ENCODE measurements at regions of chr17 and their contacts with region 1.

Region 1: DNA sequence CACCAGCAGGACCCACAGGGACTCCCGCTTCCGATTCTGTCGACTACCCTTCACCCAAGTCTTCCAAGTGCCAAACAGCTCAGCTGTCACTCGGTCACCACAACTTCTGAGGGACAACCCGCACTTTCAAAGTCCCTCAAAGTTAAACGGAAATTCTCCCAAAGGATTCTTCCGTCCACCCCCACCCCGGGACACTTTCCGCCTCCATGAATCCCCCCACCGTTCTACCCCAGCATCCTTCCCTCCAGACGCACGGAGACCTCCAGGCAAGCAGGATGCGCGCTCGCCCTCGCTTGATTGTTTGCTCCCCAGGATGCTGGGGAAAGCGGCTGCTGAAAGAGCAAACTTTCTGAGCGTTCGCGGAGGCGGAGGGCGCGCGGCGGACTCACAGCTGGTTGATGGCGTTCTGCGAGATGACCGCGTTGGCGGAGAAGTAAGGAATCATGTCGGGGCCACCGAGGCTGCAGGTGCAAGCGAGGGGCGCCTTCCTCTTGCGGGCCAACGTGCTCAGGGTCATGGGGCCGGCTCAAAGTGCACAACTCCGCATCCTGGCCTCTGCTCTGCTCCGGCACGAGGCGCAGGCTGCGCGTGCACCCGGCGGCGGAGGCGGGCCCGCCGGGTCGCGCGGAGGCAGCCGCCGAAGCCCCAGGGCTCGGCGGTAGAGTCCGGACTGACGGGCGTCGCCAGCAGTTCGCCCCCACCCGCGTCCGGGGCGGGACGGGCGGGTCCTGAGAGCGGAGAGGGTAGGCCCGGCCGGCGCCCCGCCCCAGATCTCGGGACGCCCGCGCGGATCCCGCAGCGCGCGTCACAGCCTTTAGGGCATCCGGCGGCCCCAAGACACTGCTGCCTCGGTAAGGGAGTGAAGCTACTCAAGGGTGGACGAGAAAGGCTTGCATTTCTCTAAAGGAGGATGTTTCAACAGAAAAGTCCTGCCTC is 138.3 kb upstream of the CORO6 start:
- DNase-seq: peak; percentile 98
- ATAC-seq: peak; percentile 99

Region 2: GRCh38 chr17:29622337-29623282 is 138.4 kb before region 1 on chr17 and contains the start of gene CORO6:
- intact Hi-C with region 1: loop called (anchors 5 kb)
- DNase-seq: peak; percentile 86
- ATAC-seq: peak; percentile 72
- total RNA-seq, gene CORO6: 93.2 TPM

Region 3: DNA sequence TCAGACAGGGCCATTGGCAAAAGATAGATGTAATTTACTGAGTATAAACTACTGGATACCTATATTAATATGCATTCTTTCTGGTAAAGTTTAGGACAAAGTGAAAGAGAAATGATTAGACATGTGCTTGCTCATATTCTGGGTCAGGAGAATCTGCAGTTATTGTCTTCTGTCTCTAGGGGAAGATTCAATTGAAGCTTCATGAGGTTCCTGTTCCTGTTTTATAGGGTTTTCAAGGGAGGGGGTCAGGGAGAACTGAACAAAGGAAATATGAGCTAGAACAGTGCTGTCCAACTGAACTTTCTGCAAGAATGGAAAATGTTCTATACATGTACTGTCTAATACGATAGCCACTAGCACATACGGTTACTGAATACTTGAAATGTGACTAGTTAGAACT is 79.0 kb before region 1 on chr17:
- intact Hi-C with region 1: loop called (anchors 5 kb)
- DNase-seq: no peak
- ATAC-seq: no peak

Region 4: DNA sequence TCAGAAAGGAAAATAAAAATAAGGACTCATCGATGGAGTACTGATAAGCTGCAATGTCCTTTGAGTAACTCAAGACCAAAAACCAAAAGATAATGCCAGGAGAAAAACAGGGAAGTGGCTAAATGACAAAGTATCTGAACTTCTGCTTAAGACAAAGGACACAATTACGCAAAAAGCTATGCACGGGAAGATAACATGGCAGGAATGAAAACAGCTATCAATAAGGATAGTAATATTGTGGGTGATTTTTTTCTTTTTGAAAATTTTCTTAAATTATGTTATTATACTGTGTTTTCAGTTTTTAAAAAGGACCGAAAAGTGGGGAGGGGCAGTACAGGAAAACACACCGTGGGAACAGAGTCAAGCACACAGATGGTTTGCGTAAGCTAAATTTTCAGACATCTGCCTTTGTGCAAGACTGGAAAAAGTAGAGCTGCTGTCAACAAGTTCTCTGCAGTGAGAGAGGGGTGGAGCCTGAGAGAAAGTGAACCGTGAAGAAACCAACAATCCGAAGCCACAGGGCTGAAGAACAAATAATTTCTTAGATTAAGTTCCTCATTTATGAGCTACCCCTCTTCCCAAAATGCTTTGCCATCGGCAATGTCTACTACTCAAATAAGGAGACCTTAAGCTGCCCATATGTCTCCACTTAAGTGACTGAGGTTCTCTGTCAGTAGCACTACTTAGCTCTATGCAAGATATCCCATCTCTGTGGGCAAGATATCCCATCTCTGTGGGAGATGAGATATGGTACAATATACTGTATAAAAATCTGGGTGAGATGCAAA is 38.4 kb before region 1 on chr17:
- intact Hi-C with region 1: loop called (anchors 5 kb)
- DNase-seq: no peak
- ATAC-seq: peak; percentile 94

Region 5: GRCh38 chr17:29744121-29744520 is 16.9 kb before region 1 on chr17:
- intact Hi-C with region 1: loop called (anchors 2 kb)
- DNase-seq: no peak
- ATAC-seq: peak; percentile 19